HepG2 (cell line): ENCODE measurements at regions of chr7 and their contacts with region 1.

Region 1: DNA sequence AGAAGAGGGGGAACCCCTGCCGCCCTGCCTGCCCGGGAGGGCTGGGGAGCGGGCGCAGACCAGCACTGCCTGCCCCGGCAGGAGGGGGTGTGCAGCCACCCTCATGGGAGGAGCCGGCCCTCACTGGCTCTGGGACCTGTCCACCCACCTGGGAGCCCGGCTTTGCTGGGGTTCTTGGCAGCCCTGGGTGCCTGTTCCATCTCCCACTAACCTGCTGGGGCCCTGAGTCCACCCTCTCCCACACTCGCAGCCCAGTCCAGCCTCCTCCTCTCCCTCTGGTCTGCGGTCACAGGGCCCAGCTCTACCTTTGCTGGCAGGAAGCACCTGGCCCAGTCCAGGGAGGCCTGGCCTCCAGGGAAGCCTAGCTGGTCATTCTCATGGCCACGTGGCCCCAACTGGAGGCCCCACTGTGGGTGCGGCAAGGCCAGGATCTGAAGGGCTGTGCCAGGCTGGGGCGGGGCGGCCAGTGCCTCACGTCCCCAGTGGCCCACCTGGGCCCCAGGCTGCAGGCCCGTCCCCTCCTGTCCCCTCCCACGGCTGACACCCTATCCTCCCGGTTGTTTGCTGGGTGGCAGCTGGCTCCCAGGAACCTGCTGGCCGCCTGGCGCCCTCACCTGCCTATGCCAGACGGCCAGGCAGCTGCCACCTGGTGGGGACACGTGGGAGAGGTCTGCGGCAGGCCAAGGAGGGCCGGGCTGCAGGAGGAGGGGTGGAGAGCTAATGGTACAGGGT is at the start of gene TMEM184A:
- DNase-seq: peak; percentile 89
- ATAC-seq: peak; percentile 76
- H3K4me3 ChIP-seq: peak within 1 kb of the TSS; percentile 35 to 72 (median 55); a peak in 5 of 6 replicates
- H3K27ac ChIP-seq: peak within 1 kb of the TSS; percentile 89
- H3K4me1 ChIP-seq: peaks cover 54% of the 10 kb centered on the region
- H3K27me3 ChIP-seq: peaks cover 3 to 7% of the 10 kb centered on the region in 2 experiments; a peak in 2 of 5 replicates
- CTCF ChIP-seq: peak; percentile 97
- EP300 ChIP-seq: 0 out of 4 replicates have a peak, but pooled peaks of 1 of the 2 experiments have one; percentile 14
- POLR2A ChIP-seq: peak in 1 of 2 experiments; percentile 57; a peak in 2 of 4 replicates
- RAD21 ChIP-seq: peak; percentile 92
- total RNA-seq, gene TMEM184A: 3.1 and 9.5 TPM in 2 replicates

Region 2: DNA sequence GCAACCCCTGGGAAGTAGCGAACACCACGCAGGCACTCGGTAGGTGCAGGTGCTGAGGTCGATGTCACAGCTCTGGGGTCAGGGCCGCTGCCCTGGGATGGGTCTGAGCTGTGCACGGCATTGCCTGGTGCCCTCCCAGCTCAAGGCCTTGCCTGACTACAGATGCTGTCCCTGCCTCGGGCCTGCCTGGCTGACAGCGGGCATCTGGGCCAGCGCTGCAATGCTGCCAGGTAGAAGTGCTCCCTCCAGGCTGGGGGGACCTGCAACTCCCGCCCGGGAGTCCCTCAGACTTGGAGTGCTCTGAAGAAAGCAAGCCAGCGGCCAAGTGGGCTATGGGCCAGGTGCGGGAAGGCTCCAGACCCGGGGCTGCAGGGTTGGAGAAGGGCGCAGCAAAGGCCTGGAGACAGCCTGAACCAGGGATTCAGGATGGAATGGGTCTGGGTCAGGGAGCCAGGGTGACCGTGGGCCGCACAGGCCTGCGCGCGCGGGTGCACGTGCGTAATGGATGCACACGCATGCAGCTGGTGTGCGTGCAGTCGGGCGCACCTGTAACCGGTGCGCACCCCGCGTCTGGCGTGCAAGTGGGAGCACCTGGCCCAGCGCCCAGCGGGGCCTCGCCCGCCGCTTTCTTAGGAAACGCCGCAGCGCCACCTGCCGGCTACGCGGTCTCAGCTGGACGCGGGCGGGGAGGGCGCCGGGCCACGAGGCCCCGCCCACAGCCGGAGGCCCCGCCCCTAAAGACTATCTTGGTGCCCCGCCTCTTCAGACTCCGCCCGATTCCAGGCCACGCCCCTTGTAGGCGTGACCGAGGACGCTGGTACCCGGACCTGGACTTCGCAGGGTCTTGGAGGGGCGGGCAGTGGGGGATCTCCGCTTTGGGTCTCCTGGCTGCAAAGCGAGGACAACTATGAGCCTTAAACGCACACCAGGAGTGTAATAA is 143.4 kb before region 1 on chr7:
- CTCF ChIA-PET with region 1: no interaction called
- POLR2A ChIA-PET with region 1: no interaction called
- in situ Hi-C with region 1: no loop called
- intact Hi-C with region 1: no loop called
- DNase-seq: peak; percentile 69
- ATAC-seq: peak; percentile 83
- H3K4me3 ChIP-seq: peak overlapping the region in 1 of 3 experiments; percentile 39; a peak in 1 of 6 replicates
- H3K27ac ChIP-seq: no peak overlapping the region
- H3K4me1 ChIP-seq: no peaks in the 10 kb centered on the region
- H3K27me3 ChIP-seq: peaks cover 6 to 39% of the 10 kb centered on the region in 2 experiments
- CTCF ChIP-seq: peak; percentile 92
- EP300 ChIP-seq: no peak
- POLR2A ChIP-seq: no peak
- RAD21 ChIP-seq: peak; percentile 95

Region 3: GRCh38 chr7:1503816-1504775 is 51.9 kb before region 1 on chr7 and contains the start of gene INTS1:
- CTCF ChIA-PET with region 1: interaction called, 24 read pairs
- POLR2A ChIA-PET with region 1: interaction called, 30 read pairs
- in situ Hi-C with region 1: loop called (anchors 5 kb)
- intact Hi-C with region 1: loop called (anchors 1 kb)
- DNase-seq: peak; percentile 84
- ATAC-seq: peak; percentile 87
- H3K4me3 ChIP-seq: peak within 1 kb of the TSS; percentile 91 to 100 (median 97)
- H3K27ac ChIP-seq: peak within 1 kb of the TSS; percentile 55
- H3K4me1 ChIP-seq: peaks cover 40% of the 10 kb centered on the region
- H3K27me3 ChIP-seq: no peaks in the 10 kb centered on the region; a peak in 1 of 5 replicates
- CTCF ChIP-seq: peak; percentile 87
- EP300 ChIP-seq: peak in 1 of 2 experiments; percentile 64; a peak in 2 of 4 replicates
- POLR2A ChIP-seq: peak; percentile 56 to 71; a peak in 3 of 4 replicates
- RAD21 ChIP-seq: peak; percentile 92
- total RNA-seq, gene INTS1: 17.3 and 29.0 TPM in 2 replicates

Region 4: DNA sequence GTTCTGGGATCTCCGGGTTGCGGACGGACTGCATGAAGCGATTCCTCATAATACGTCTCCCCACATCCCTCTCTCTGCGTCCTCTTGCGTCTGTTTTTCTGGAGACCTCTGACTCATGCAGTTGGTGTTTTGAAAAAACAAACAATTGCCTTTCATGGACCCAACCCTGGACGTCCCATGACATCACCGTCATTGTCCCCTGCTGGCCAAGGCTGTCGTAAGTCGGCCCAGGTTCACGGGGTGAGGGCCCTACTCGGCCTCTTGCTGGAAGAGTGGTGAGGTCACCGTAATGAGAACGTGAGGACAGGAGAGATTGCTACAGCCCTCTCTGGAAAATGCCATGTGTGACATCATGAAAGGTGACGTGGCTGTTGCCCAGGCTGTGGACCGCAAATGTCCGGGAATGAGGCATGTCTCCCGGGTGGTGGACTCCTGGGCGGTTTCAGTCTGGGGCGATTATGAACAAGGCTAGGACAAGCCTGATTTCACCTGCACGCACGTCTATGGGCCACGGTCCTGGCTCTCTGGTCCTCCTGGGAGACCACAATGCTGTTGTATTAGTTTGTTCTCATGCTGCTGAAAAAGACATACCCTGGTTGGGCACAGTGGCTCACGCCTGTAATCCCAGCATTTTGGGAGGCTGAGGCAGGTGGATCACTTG is 35.3 kb before region 1 on chr7:
- CTCF ChIA-PET with region 1: interaction called, 3 read pairs
- POLR2A ChIA-PET with region 1: interaction called, 21 read pairs
- in situ Hi-C with region 1: no loop called
- intact Hi-C with region 1: loop called (anchors 5 kb)
- DNase-seq: peak; percentile 96
- ATAC-seq: peak; percentile 77
- H3K4me3 ChIP-seq: peak overlapping the region in 2 of 3 experiments; percentile 30 to 50; a peak in 4 of 6 replicates
- H3K27ac ChIP-seq: peak overlapping the region; percentile 60
- H3K4me1 ChIP-seq: peaks cover 68% of the 10 kb centered on the region
- H3K27me3 ChIP-seq: peaks cover 0 to 15% of the 10 kb centered on the region in 2 experiments; a peak in 4 of 5 replicates
- CTCF ChIP-seq: peak; percentile 36
- EP300 ChIP-seq: peak; percentile 56 to 76; a peak in 3 of 4 replicates
- POLR2A ChIP-seq: no peak; a peak in 1 of 4 replicates
- RAD21 ChIP-seq: no peak

Region 5: GRCh38 chr7:1537535-1538412 is 18.2 kb before region 1 on chr7:
- CTCF ChIA-PET with region 1: no interaction called
- POLR2A ChIA-PET with region 1: interaction called, 108 read pairs
- in situ Hi-C with region 1: no loop called
- intact Hi-C with region 1: loop called (anchors 2 kb)
- DNase-seq: no peak
- ATAC-seq: no peak
- H3K4me3 ChIP-seq: peak overlapping the region; percentile 33 to 68 (median 61); a peak in 4 of 6 replicates
- H3K27ac ChIP-seq: peak overlapping the region; percentile 85
- H3K4me1 ChIP-seq: peaks cover 47% of the 10 kb centered on the region
- H3K27me3 ChIP-seq: no peaks in the 10 kb centered on the region
- CTCF ChIP-seq: 0 out of 2 replicates have a peak, but pooled peaks have one; percentile 1
- EP300 ChIP-seq: no peak; a peak in 1 of 4 replicates
- POLR2A ChIP-seq: peak in 1 of 2 experiments; percentile 35; a peak in 1 of 4 replicates
- RAD21 ChIP-seq: 0 out of 2 replicates have a peak, but pooled peaks have one; percentile 7